Calu3 (cell line): ENCODE measurements at regions of chr10 and their contacts with region 1.

Region 1: GRCh38 chr10:98474628-98475027 is 27.9 kb upstream of the HPS1 start:
- DNase-seq: no peak
- H3K4me3 Mint-ChIP-seq: no peak overlapping the region
- H3K27ac Mint-ChIP-seq: no peak overlapping the region
- H3K4me1 Mint-ChIP-seq: no peaks in the 10 kb centered on the region
- H3K27me3 Mint-ChIP-seq: no peaks in the 10 kb centered on the region
- CTCF ChIP-seq: no peak

Region 2: GRCh38 chr10:98577578-98577977 is 103.0 kb after region 1 on chr10:
- CTCF ChIA-PET with region 1: no interaction called
- intact Hi-C with region 1: loop called (anchors 10 kb)
- DNase-seq: no peak
- H3K4me3 Mint-ChIP-seq: no peak overlapping the region
- H3K27ac Mint-ChIP-seq: no peak overlapping the region
- H3K4me1 Mint-ChIP-seq: no peaks in the 10 kb centered on the region
- H3K27me3 Mint-ChIP-seq: peaks cover 45% of the 10 kb centered on the region
- CTCF ChIP-seq: no peak

Region 3: GRCh38 chr10:98646998-98647917 is 172.6 kb after region 1 on chr10:
- CTCF ChIA-PET with region 1: no interaction called
- intact Hi-C with region 1: no loop called
- DNase-seq: no peak
- H3K4me3 Mint-ChIP-seq: no peak overlapping the region
- H3K27ac Mint-ChIP-seq: no peak overlapping the region
- H3K4me1 Mint-ChIP-seq: no peaks in the 10 kb centered on the region
- H3K27me3 Mint-ChIP-seq: peaks cover 36% of the 10 kb centered on the region
- CTCF ChIP-seq: no peak

Region 4: GRCh38 chr10:98808282-98808892 is 333.8 kb after region 1 on chr10:
- CTCF ChIA-PET with region 1: no interaction called
- intact Hi-C with region 1: loop called (anchors 5 kb)
- DNase-seq: no peak
- H3K4me3 Mint-ChIP-seq: no peak overlapping the region
- H3K27ac Mint-ChIP-seq: no peak overlapping the region
- H3K4me1 Mint-ChIP-seq: no peaks in the 10 kb centered on the region
- H3K27me3 Mint-ChIP-seq: no peaks in the 10 kb centered on the region
- CTCF ChIP-seq: no peak